Dorsolateral prefrontal cortex (tissue), 120 donors: ENCODE measurements at regions of chr12 and their contacts with region 1.

Region 1: GRCh38 chr12:4866299-4866698 is 43.4 kb upstream of the KCNA1 start:
- DNase-seq: no peak
- H3K4me3 ChIP-seq: no peak overlapping the region
- H3K27ac ChIP-seq: no peak overlapping the region
- H3K27me3 ChIP-seq: peaks cover 0 to 10% (median 0%) of the 10 kb centered on the region in 45 donors
- CTCF ChIP-seq: no peak

Region 2: DNA sequence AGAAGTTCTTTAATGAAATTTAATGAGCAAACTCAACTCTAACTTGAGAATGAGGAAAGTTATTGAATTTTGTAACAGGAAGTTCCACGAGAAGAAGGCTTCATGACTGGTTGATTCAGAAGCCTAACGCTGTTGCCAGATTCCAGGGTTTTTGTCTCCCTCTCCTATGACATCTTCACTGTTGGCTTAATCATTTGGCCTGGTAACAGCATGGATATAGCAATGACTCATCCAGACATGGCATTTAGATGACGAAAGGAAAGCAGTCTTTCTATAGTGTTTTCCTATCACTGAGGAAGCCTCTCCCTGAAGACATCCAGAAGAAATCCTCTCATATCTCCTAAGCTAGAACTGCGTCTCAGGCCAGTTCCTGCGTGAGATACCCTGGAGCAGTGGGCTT is 34.0 kb after region 1 on chr12:
- intact Hi-C with region 1: loop called in 1 of 2 experiments (anchors 2 kb)
- DNase-seq: no peak
- H3K4me3 ChIP-seq: no peak overlapping the region
- H3K27ac ChIP-seq: peak overlapping the region in 4 of 59 donors; percentile 3 to 46 (median 23)
- H3K27me3 ChIP-seq: peaks cover 0 to 17% (median 0%) of the 10 kb centered on the region in 45 donors
- CTCF ChIP-seq: no peak